OCI-LY7 (cell line): ENCODE measurements at regions of chr10 and their contacts with region 1.

Region 1: GRCh38 chr10:74189999-74190421 is 39.0 kb downstream of the ADK start:
- DNase-seq: peak; percentile 78
- H3K4me3 ChIP-seq: peak overlapping the region; percentile 50
- H3K27ac ChIP-seq: peak overlapping the region; percentile 48
- H3K4me1 ChIP-seq: peaks cover 23% of the 10 kb centered on the region
- CTCF ChIP-seq: no peak

Region 2: GRCh38 chr10:73591935-73592699 is 597.9 kb before region 1 on chr10:
- CTCF ChIA-PET with region 1: no interaction called
- POLR2A ChIA-PET with region 1: no interaction called
- intact Hi-C with region 1: no loop called
- DNase-seq: peak; percentile 69
- H3K4me3 ChIP-seq: peak overlapping the region; percentile 12
- H3K27ac ChIP-seq: no peak overlapping the region
- H3K4me1 ChIP-seq: peaks cover 17% of the 10 kb centered on the region
- CTCF ChIP-seq: no peak

Region 3: DNA sequence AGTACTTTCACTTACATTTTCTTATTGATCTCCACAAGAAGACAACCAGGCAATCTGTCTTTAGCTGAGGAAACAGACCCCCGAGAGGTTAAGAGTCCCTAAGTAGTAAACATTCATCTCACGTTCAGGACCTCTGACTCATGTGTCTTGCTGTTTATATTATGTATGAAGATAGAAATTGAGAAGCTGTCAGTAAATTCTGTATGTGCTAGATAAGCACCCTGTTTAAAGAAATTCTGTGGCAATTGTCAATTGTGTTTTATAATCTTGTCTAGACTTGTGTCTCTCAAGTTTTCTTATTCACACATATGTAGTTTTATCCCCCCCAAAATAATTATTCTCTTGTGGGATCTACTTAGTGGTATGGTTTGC is 24.5 kb before region 1 on chr10:
- CTCF ChIA-PET with region 1: no interaction called
- POLR2A ChIA-PET with region 1: interaction called, 17 read pairs
- intact Hi-C with region 1: no loop called
- DNase-seq: no peak
- H3K4me3 ChIP-seq: no peak overlapping the region
- H3K27ac ChIP-seq: no peak overlapping the region
- H3K4me1 ChIP-seq: peaks cover 50% of the 10 kb centered on the region
- CTCF ChIP-seq: no peak